Ovary (tissue), 10 donors: ENCODE measurements at regions of chr21 and their contacts with region 1.

Region 1: DNA sequence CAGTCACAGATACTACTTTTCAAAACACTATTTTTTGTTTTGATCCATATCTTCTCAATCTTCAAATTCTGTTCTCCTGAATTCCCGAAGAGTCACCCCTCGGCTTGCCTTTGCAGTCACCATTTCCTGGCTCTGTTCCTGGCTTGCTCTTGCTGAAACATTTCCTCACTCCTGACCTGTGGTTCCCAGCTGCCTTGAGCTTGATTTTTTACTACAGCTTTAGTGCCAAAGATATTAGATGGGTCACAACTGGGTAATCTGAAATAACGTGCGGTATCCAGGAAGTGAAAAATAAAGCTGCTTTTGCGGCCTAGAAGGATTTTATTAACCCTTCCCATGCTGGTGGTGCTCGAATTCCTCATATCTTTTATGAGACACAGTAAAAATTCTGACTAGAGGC is 318.8 kb downstream of the PCP4 start:
- DNase-seq: no peak
- H3K4me3 ChIP-seq: no peak overlapping the region
- H3K27ac ChIP-seq: no peak overlapping the region
- H3K4me1 ChIP-seq: no peaks in the 10 kb centered on the region
- H3K27me3 ChIP-seq: no peaks in the 10 kb centered on the region
- CTCF ChIP-seq: no peak
- EP300 ChIP-seq: no peak
- POLR2A ChIP-seq: no peak

Region 2: GRCh38 chr21:40160911-40161310 is 25.1 kb before region 1 on chr21:
- intact Hi-C with region 1: loop called in 1 of 4 experiments (anchors 1 kb)
- DNase-seq: no peak
- H3K4me3 ChIP-seq: no peak overlapping the region
- H3K27ac ChIP-seq: no peak overlapping the region
- H3K4me1 ChIP-seq: no peaks in the 10 kb centered on the region
- H3K27me3 ChIP-seq: no peaks in the 10 kb centered on the region
- CTCF ChIP-seq: no peak
- EP300 ChIP-seq: no peak
- POLR2A ChIP-seq: no peak

Region 3: DNA sequence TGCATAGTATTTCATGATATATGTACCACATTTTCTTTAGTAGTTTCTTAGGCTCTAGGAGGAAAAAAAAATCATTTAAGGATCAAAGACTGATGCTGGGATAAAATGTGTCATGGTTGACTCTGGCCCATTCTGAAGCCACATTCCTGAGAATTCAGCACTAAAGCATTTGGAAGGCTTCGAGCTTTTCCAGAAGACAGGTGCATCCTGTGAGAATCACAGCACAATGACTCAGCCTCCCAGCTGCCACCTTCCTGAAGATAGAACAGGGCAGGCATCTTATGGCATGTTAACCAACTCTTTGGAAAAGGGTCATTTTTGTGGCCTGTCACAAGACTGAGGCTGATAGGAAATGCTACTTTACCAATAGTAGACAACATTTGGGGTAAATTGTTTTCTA is 41.1 kb after region 1 on chr21:
- intact Hi-C with region 1: no loop called
- DNase-seq: no peak
- H3K4me3 ChIP-seq: no peak overlapping the region
- H3K27ac ChIP-seq: no peak overlapping the region
- H3K4me1 ChIP-seq: no peaks in the 10 kb centered on the region
- H3K27me3 ChIP-seq: no peaks in the 10 kb centered on the region
- CTCF ChIP-seq: no peak
- EP300 ChIP-seq: no peak
- POLR2A ChIP-seq: no peak